A549 (cell line): ENCODE measurements at regions of chr19 and their contacts with region 1.

Region 1: DNA sequence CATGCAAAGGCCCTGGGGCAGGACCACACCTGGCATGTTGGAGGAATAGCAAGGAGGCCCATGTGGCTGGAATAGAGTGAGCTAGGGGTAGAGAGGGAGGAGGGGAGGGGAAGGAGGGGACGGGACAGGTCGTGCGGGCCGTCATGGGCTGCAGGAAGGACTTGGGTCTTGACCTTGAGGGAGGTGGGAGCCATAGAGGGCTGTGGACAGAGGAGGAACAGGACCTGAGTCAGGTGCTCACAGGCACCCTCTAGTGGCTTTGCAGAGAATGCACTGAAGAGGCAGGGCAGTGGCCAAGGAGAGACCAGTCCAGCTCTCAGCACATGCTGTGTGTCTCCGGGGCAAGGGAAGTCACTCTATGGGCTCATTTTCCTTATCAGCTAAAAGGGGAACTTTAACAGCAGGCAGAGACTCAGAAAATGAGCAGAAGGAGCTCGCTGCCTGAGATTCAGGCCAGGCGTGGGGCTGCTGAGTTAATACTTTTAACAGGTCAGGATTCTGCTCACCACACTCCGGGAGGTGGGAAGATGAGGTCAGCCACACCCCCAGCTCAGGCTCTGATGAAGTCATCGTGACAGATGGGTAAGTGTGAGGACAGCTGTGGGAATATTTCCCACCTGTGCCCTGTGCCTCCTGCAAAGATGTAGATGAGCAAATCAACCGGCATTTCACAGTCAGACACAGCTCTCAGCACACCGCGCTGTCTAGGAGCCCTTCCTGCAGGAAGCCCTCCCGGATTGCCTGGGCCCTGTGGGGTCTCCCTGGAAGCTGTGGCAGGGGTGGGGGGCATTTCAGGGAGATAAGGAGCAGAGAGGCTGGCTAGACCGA is 6.0 kb upstream of the TNFAIP8L1 start:
- DNase-seq: peak; percentile 60 to 82
- ATAC-seq: peak; percentile 86 to 88
- H3K4me3 ChIP-seq: no peak overlapping the region
- H3K27ac ChIP-seq: peak overlapping the region in 1 of 2 experiments; percentile 92; a peak in 3 of 6 replicates
- H3K4me1 ChIP-seq: peaks cover 22% of the 10 kb centered on the region
- CTCF ChIP-seq: peak; percentile 76
- EP300 ChIP-seq: no peak
- POLR2A ChIP-seq: no peak
- RAD21 ChIP-seq: peak; percentile 46 to 47; a peak in 4 of 5 replicates

Region 2: DNA sequence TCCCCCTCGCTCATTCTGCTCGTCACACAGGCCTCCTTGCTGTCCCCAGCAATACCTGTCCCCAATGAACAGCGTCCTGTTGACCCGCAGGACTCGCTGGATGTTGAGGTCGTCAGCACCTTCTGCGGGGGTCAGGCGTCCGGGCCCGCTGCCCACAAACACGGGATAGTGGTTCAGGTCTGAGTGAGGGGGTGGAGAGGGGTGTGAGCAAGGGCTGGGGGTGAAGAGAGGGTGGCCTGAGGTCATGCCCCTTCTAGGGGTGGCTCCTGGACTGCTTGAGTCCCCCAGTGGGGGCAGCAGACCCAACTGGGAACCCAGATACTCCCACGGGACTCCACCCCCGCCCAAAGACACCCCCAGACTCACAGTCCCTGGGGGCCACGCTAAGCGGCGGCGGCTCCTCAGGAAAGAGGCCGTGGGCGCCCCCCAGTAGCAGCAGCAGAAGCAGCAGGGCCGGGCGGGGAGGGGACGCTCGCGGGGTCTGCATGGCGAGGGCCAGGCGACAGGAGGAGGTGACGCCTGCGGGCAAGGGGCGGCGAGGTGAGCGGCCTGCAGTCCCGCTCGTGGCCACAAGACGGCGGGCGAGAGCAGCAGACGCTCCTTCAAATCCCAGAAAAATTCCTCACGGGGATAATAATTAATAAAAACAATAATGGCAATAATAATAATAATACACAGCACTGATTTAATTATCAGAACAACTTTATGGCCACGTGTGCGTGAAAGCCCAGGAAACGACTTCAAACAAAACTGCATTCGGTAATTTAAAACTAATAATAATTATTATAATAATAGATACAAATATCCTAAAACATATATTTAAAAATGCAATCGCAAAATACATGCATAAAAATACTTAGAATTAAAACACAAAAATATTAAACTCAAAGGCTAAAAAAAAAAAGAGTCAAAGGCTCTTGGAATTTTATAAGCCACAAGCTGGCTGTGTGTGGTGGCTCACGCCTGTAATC is 75.1 kb before region 1 on chr19:
- CTCF ChIA-PET with region 1: interaction called, 22 read pairs
- POLR2A ChIA-PET with region 1: no interaction called
- DNase-seq: no peak
- ATAC-seq: peak in 1 of 2 experiments; percentile 9; a peak in 1 of 6 replicates
- H3K4me3 ChIP-seq: no peak overlapping the region
- H3K27ac ChIP-seq: peak overlapping the region in 1 of 2 experiments; percentile 76; a peak in 2 of 6 replicates
- H3K4me1 ChIP-seq: peaks cover 13% of the 10 kb centered on the region
- CTCF ChIP-seq: peak; percentile 77
- EP300 ChIP-seq: no peak
- POLR2A ChIP-seq: no peak
- RAD21 ChIP-seq: peak; percentile 45 to 46; a peak in 4 of 5 replicates

Region 3: GRCh38 chr19:4567584-4568071 is 65.7 kb before region 1 on chr19:
- CTCF ChIA-PET with region 1: interaction called, 118 read pairs
- POLR2A ChIA-PET with region 1: no interaction called
- DNase-seq: peak in 1 of 2 experiments; percentile 80
- ATAC-seq: peak; percentile 85 to 91
- H3K4me3 ChIP-seq: no peak overlapping the region
- H3K27ac ChIP-seq: peak overlapping the region in 1 of 2 experiments; percentile 58; a peak in 2 of 6 replicates
- H3K4me1 ChIP-seq: peaks cover 8% of the 10 kb centered on the region; the same call in 2 of the 3 replicates
- CTCF ChIP-seq: peak; percentile 58
- EP300 ChIP-seq: no peak
- POLR2A ChIP-seq: no peak
- RAD21 ChIP-seq: peak; percentile 27 to 48; a peak in 4 of 5 replicates

Region 4: GRCh38 chr19:4576016-4576933 is 57.1 kb before region 1 on chr19:
- CTCF ChIA-PET with region 1: interaction called, 118 read pairs
- POLR2A ChIA-PET with region 1: interaction called, 3 read pairs
- DNase-seq: peak; percentile 72
- ATAC-seq: peak; percentile 49 to 71; a peak in 5 of 6 replicates
- H3K4me3 ChIP-seq: no peak overlapping the region
- H3K27ac ChIP-seq: peak overlapping the region; percentile 85 to 99
- H3K4me1 ChIP-seq: peaks cover 36% of the 10 kb centered on the region
- CTCF ChIP-seq: peak; percentile 63
- EP300 ChIP-seq: no peak
- POLR2A ChIP-seq: no peak
- RAD21 ChIP-seq: peak; percentile 48 to 50; a peak in 4 of 5 replicates

Region 5: DNA sequence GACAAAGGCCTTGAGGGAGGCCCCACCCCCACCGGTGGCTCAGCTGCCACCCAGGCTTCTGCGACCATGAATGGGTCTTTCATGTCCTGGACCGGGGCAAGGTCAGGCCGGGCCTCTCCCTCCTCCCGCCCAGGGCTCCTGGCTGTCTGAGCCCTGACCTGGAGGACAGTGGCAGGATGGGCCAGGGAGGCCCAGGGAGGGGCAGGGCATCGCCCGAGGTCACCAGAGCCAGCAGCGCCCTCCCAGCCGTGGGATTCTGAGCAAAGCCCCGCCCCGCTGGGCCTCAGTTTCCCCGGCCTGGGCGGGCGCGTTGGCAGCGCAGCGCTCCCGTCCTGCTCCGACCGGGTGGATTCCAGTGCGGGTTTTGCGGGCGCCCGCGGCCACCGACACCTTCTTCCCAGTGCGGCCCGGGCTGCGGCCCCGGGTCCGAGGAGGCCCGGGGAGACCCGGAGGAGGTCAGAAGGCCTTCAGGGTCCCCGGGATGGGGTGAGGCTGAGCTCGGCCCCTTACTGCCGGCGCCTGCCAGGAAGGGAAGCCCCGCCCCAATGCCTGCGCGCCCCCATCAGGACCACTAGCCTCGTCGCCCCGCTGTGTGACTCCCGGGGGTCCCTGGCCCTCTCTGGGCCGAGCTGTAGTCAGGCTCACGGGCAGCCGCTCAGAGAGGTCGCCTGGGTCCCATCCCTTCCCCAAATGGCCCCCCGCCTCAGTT is 49.2 kb before region 1 on chr19:
- CTCF ChIA-PET with region 1: interaction called, 97 read pairs
- POLR2A ChIA-PET with region 1: no interaction called
- DNase-seq: no peak
- ATAC-seq: peak; percentile 52 to 71; a peak in 5 of 6 replicates
- H3K4me3 ChIP-seq: peak overlapping the region; percentile 64
- H3K27ac ChIP-seq: peak overlapping the region; percentile 77 to 95
- H3K4me1 ChIP-seq: peaks cover 27% of the 10 kb centered on the region
- CTCF ChIP-seq: no peak
- EP300 ChIP-seq: no peak
- POLR2A ChIP-seq: no peak
- RAD21 ChIP-seq: no peak

Region 6: GRCh38 chr19:4589579-4590410 is 43.6 kb before region 1 on chr19:
- CTCF ChIA-PET with region 1: interaction called, 97 read pairs
- POLR2A ChIA-PET with region 1: no interaction called
- DNase-seq: no peak
- ATAC-seq: peak; percentile 79 to 80; a peak in 5 of 6 replicates
- H3K4me3 ChIP-seq: no peak overlapping the region
- H3K27ac ChIP-seq: no peak overlapping the region
- H3K4me1 ChIP-seq: peaks cover 2% of the 10 kb centered on the region
- CTCF ChIP-seq: peak; percentile 38; the same call in 2 of the 3 replicates
- EP300 ChIP-seq: no peak
- POLR2A ChIP-seq: no peak
- RAD21 ChIP-seq: peak; percentile 12 to 21; a peak in 1 of 5 replicates

Region 7: DNA sequence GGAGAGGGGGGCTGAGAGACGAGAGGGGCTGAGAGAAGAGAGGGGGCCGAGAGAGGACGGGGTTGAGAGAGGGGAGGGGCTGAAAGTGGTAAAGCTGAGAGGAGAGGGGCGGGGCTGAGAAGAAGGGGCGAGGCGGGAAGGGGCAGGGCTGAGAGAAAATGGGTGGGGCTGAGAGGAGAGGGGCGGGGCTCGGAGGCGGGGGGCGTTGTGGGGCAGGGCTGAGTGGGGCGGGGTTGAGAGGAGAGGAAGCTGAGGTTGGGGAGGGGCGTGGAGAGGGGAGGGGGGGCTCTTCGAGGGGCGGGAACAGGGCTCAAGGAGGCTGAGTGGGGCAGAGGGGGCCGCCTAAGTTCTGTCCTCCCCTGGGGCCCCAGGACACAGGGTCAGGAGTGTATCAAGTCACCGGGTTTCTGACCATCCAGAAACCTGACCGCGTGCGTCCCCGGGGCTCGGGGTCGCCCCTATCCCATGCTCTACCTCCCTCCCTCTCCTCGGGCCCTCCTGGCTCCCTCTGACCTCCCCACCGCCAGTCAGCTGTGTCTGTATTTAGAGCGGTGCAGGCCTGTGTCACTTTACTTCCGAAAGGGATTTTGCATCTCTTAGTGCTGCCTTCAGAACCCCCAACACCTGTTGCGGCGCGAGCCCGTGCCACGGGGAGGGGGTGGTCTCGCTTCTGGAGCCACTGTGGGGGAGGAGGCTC is 35.2 kb before region 1 on chr19:
- CTCF ChIA-PET with region 1: interaction called, 97 read pairs
- POLR2A ChIA-PET with region 1: no interaction called
- DNase-seq: peak; percentile 70 to 78
- ATAC-seq: peak; percentile 67 to 80
- H3K4me3 ChIP-seq: peak overlapping the region; percentile 44
- H3K27ac ChIP-seq: peak overlapping the region; percentile 38 to 80; a peak in 4 of 6 replicates
- H3K4me1 ChIP-seq: peaks cover 3% of the 10 kb centered on the region; the same call in 1 of the 3 replicates
- CTCF ChIP-seq: no peak
- EP300 ChIP-seq: no peak
- POLR2A ChIP-seq: no peak
- RAD21 ChIP-seq: no peak